ENCODE measurements at regions of chr17 and their contacts with region 1.

Region 1: DNA sequence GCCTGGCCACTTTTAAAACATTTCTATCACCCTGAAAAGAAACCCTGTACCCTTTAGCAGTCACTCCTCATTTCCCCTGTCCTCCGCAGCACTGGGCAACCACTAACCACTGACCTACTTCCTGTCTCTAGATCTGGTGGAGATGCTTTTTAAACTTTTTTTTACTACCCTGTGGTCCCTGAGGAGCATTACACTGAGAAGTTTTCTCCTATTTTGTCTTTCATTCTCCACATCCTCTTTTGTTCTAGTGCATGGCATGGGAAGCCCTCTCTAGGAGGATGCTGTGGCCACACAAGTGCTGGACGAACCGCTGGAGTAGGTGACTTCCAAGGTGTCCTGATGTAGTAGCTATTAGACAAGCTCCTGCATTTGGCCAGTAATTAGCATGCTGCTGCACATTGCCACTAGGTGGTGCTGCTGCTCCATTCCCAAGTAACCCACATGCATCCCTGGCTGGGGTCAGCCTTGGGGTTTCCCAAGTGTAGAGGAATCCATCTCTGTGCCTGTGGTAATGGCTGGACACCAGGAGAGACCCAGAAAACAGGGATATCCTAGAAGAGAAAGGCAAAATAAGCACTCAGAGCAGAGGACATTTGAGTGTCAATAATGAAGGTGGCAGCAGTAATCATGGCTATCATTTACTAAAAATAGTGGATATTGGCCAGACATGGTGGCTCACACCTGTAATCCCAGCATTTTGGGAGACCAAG is 143.8 kb upstream of the CRHR1 start:
- DNase-seq: peak; percentile 91
- ATAC-seq: peak; percentile 93
- H3K4me3 Mint-ChIP-seq: no peak overlapping the region
- H3K27ac Mint-ChIP-seq: no peak overlapping the region
- H3K4me1 Mint-ChIP-seq: no peaks in the 10 kb centered on the region
- H3K27me3 Mint-ChIP-seq: no peaks in the 10 kb centered on the region
- CTCF ChIP-seq: peak; percentile 93

Region 2: GRCh38 chr17:45579529-45580495 is 60.5 kb before region 1 on chr17:
- CTCF ChIA-PET with region 1: no interaction called
- POLR2A ChIA-PET with region 1: no interaction called
- DNase-seq: no peak
- ATAC-seq: peak; percentile 21
- H3K4me3 Mint-ChIP-seq: no peak overlapping the region; the same call in 1 of the 2 replicates
- H3K27ac Mint-ChIP-seq: peak overlapping the region; percentile 1; the same call in 1 of the 2 replicates
- H3K4me1 Mint-ChIP-seq: peaks cover 57% of the 10 kb centered on the region
- H3K27me3 Mint-ChIP-seq: no peaks in the 10 kb centered on the region
- CTCF ChIP-seq: no peak

Region 3: GRCh38 chr17:45675012-45675411 is 34.7 kb after region 1 on chr17:
- CTCF ChIA-PET with region 1: interaction called, 10 read pairs
- POLR2A ChIA-PET with region 1: no interaction called
- DNase-seq: no peak
- ATAC-seq: no peak
- H3K4me3 Mint-ChIP-seq: no peak overlapping the region
- H3K27ac Mint-ChIP-seq: no peak overlapping the region
- H3K4me1 Mint-ChIP-seq: no peaks in the 10 kb centered on the region
- H3K27me3 Mint-ChIP-seq: peaks cover 12% of the 10 kb centered on the region
- CTCF ChIP-seq: no peak

Region 4: DNA sequence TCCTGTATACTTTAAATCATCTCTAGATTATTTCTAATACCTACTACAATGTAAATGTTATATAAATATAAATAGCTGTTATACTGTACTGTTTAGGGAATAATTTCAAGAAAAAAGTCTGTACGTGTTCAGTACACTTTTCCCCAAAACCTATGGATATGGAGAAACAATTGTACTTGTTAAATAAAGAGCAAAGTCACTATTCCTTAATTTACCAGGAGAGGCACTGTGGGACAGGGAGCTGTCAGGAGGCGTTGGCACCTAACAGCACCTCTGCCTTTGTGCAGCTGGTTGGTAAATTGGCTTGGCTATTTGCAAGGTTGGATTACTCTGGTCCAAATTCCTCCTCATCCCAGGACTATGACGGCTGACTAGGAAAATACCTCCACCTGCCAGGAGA is 171.8 kb after region 1 on chr17:
- CTCF ChIA-PET with region 1: interaction called, 11 read pairs
- POLR2A ChIA-PET with region 1: no interaction called
- DNase-seq: no peak
- ATAC-seq: peak; percentile 30
- H3K4me3 Mint-ChIP-seq: no peak overlapping the region
- H3K27ac Mint-ChIP-seq: no peak overlapping the region
- H3K4me1 Mint-ChIP-seq: peaks cover 14% of the 10 kb centered on the region
- H3K27me3 Mint-ChIP-seq: no peaks in the 10 kb centered on the region; the same call in 1 of the 2 replicates
- CTCF ChIP-seq: no peak

Region 5: DNA sequence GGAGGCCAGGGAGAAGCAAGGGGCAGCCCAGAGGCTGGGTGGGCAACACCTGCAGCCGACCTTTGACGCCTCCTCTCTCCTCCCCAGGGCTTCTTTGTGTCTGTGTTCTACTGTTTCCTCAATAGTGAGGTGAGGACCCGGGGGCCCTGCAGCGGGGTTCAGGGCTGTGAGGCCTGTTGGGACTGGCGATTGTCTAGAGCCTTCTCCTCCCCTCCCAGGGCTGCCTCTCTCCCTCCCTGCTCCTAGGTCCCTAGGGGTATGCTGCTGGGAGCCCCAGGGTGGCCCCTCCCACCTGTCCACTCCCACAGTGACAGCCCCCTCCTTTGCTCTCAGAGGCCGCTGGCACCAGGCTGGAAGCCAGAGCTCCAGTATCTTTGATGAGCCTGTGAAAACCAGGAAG is 193.6 kb after region 1 on chr17:
- CTCF ChIA-PET with region 1: interaction called, 45 read pairs
- POLR2A ChIA-PET with region 1: interaction called, 3 read pairs
- DNase-seq: no peak
- ATAC-seq: no peak
- H3K4me3 Mint-ChIP-seq: no peak overlapping the region
- H3K27ac Mint-ChIP-seq: no peak overlapping the region
- H3K4me1 Mint-ChIP-seq: 0 out of 2 replicates have a peak, but pooled peaks cover 5% of the 10 kb centered on the region
- H3K27me3 Mint-ChIP-seq: no peaks in the 10 kb centered on the region
- CTCF ChIP-seq: no peak

Measured in WTC11 (cell line).